ENCODE measurements at regions of chr1 and their contacts with region 1.

Region 1: GRCh38 chr1:152654110-152654509 is 9.1 kb upstream of the LCE2D start:
- DNase-seq: peak; percentile 54
- H3K4me3 ChIP-seq: no peak overlapping the region
- H3K27ac ChIP-seq: no peak overlapping the region
- H3K4me1 ChIP-seq: no peaks in the 10 kb centered on the region
- H3K27me3 ChIP-seq: no peaks in the 10 kb centered on the region
- CTCF ChIP-seq: peak; percentile 77 to 88

Region 2: DNA sequence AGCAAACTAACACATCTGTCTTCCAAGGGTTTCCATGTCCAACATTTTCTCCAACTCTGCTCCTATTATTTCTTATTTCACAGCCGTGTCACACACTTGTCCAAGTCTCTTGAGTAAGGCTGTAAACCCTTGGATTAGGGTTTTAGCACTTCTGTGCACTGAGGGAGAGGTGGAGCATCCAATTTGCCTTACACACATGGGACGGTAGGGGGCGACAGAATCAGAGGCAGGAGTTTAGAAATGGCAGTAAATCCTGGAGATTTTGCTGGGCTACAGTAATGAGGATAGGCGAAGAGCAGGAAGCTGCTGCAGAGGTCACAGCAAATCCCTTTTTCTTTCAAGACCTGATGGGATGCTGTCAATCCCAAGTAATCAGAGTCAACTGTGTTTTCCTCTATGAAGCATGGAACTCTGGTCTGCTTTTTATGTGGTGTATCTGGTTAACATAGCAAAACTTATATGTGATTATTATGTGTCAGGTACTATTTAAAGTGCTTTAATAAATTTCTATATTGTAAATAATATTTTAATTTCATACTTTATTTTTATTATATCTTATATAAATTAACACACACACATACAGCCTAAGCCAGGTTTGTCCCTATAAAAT is 158.9 kb before region 1 on chr1:
- CTCF ChIA-PET with region 1: no interaction called
- dilution Hi-C with region 1: no loop called
- in situ Hi-C with region 1: no loop called
- intact Hi-C with region 1: loop called (anchors 2 kb)
- DNase-seq: no peak
- H3K4me3 ChIP-seq: no peak overlapping the region
- H3K27ac ChIP-seq: no peak overlapping the region
- H3K4me1 ChIP-seq: no peaks in the 10 kb centered on the region
- H3K27me3 ChIP-seq: no peaks in the 10 kb centered on the region
- CTCF ChIP-seq: peak; percentile 91 to 93

Region 3: DNA sequence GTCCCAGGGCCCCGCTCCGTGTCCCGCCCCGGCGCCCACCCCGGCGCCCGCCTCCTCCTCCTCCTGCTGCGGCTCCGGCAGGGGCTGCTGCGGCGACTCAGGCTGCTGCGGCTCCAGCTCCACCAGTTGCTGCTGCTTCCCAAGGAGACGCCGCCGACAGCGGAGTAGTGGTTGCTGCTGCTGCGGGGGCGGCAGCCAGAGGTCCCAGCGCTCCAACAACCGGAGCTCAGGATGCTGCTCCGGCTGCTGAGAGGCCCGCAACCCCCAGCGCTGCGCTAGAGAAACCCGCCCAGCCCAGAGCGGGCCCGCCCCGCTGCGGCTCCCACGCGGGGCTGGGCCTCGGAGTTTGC is 138.7 kb before region 1 on chr1:
- CTCF ChIA-PET with region 1: no interaction called
- dilution Hi-C with region 1: no loop called
- in situ Hi-C with region 1: no loop called
- intact Hi-C with region 1: no loop called
- DNase-seq: peak; percentile 46
- H3K4me3 ChIP-seq: peak overlapping the region; percentile 28 to 40 (median 37)
- H3K27ac ChIP-seq: no peak overlapping the region
- H3K4me1 ChIP-seq: peaks cover 30% of the 10 kb centered on the region
- H3K27me3 ChIP-seq: no peaks in the 10 kb centered on the region
- CTCF ChIP-seq: no peak

Region 4: DNA sequence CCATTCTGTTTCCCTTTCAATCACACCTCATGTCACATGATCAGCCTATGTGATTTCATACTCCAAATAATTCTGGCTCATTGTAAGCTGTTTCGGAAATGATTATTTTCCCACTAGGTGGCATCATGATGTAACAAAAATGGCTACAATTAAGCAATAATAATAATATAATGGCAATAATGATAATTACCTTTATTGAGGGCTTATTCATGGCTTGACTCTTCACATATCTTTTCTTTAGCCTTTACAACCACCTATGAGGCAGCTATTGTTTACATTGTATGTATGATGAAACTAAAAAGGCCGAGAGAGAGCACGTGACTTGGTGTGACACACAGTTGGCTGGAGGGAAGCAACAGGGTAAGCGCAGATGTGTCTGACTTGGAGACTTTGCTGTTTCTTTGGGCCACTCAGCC is 91.2 kb after region 1 on chr1:
- CTCF ChIA-PET with region 1: no interaction called
- dilution Hi-C with region 1: no loop called
- in situ Hi-C with region 1: no loop called
- intact Hi-C with region 1: loop called (anchors 2 kb)
- DNase-seq: peak; percentile 44
- H3K4me3 ChIP-seq: no peak overlapping the region
- H3K27ac ChIP-seq: no peak overlapping the region
- H3K4me1 ChIP-seq: peaks cover 58% of the 10 kb centered on the region
- H3K27me3 ChIP-seq: no peaks in the 10 kb centered on the region
- CTCF ChIP-seq: peak; percentile 14 to 35

Region 5: GRCh38 chr1:152869808-152870419 is 215.8 kb after region 1 on chr1:
- CTCF ChIA-PET with region 1: interaction called, 5 read pairs
- dilution Hi-C with region 1: loop called (anchors 10 kb)
- in situ Hi-C with region 1: loop called in 1 of 2 experiments (anchors 10 kb)
- intact Hi-C with region 1: loop called (anchors 1 kb)
- DNase-seq: peak; percentile 54
- H3K4me3 ChIP-seq: no peak overlapping the region
- H3K27ac ChIP-seq: no peak overlapping the region
- H3K4me1 ChIP-seq: peaks cover 3% of the 10 kb centered on the region
- H3K27me3 ChIP-seq: no peaks in the 10 kb centered on the region
- CTCF ChIP-seq: peak; percentile 83 to 86

Region 6: GRCh38 chr1:153192697-153193096 is 538.6 kb after region 1 on chr1:
- CTCF ChIA-PET with region 1: interaction called, 7 read pairs
- dilution Hi-C with region 1: no loop called
- in situ Hi-C with region 1: loop called in 1 of 2 experiments (anchors 10 kb)
- intact Hi-C with region 1: loop called (anchors 1 kb)
- DNase-seq: peak; percentile 48
- H3K4me3 ChIP-seq: no peak overlapping the region
- H3K27ac ChIP-seq: no peak overlapping the region
- H3K4me1 ChIP-seq: peaks cover 7% of the 10 kb centered on the region
- H3K27me3 ChIP-seq: no peaks in the 10 kb centered on the region
- CTCF ChIP-seq: peak; percentile 82 to 90

Measured in mammary epithelial cell (primary cell).